ENCODE measurements at regions of chr22 and their contacts with region 1.

Region 1: GRCh38 chr22:40107244-40107643 is 70.5 kb upstream of the TNRC6B start:
- DNase-seq: no peak
- ATAC-seq: no peak
- H3K4me3 ChIP-seq: peak overlapping the region; percentile 37; the same call in 1 of the 2 replicates
- H3K27ac ChIP-seq: no peak overlapping the region
- H3K4me1 ChIP-seq: peaks cover 12% of the 10 kb centered on the region
- H3K27me3 ChIP-seq: no peaks in the 10 kb centered on the region
- CTCF ChIP-seq: no peak

Region 2: DNA sequence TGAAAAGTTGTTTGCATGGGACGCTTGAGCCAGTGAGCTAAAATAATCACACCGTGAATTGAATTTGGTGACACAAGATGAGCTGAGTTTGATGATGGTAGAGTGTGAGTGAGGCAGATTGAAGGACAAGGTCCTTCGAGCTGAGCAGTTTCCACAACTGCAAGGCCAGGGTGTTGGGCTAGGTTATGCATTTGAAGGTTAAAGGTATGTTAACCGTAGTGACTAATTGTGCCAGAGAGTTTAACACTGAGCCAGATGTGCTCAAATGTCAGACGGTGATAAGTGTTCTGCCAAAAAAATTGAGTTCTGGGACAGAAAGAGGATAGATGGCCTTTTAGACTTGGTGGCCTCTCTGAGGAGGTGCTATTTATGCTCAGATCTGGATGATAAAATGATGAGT is 23.0 kb before region 1 on chr22:
- CTCF ChIA-PET with region 1: no interaction called
- POLR2A ChIA-PET with region 1: interaction called, 10 read pairs
- intact Hi-C with region 1: no loop called
- DNase-seq: no peak
- ATAC-seq: no peak
- H3K4me3 ChIP-seq: no peak overlapping the region
- H3K27ac ChIP-seq: no peak overlapping the region
- H3K4me1 ChIP-seq: no peaks in the 10 kb centered on the region
- H3K27me3 ChIP-seq: no peaks in the 10 kb centered on the region
- CTCF ChIP-seq: no peak